Activated naive CD4-positive, alpha-beta T cell treated with anti-CD3 and anti-CD28 coated beads, Interleukin-2, amount 10 ng/mL, durations not matched to agents 7 days and 5 days (primary cell): ENCODE measurements at regions of chr1 and their contacts with region 1.

Region 1: GRCh38 chr1:208025031-208025430 is 114.1 kb upstream of the CD34 start:
- DNase-seq: no peak
- H3K4me3 Mint-ChIP-seq: no peak overlapping the region
- H3K27ac Mint-ChIP-seq: no peak overlapping the region
- H3K4me1 Mint-ChIP-seq: no peaks in the 10 kb centered on the region
- H3K27me3 Mint-ChIP-seq: peaks cover 38% of the 10 kb centered on the region

Region 2: DNA sequence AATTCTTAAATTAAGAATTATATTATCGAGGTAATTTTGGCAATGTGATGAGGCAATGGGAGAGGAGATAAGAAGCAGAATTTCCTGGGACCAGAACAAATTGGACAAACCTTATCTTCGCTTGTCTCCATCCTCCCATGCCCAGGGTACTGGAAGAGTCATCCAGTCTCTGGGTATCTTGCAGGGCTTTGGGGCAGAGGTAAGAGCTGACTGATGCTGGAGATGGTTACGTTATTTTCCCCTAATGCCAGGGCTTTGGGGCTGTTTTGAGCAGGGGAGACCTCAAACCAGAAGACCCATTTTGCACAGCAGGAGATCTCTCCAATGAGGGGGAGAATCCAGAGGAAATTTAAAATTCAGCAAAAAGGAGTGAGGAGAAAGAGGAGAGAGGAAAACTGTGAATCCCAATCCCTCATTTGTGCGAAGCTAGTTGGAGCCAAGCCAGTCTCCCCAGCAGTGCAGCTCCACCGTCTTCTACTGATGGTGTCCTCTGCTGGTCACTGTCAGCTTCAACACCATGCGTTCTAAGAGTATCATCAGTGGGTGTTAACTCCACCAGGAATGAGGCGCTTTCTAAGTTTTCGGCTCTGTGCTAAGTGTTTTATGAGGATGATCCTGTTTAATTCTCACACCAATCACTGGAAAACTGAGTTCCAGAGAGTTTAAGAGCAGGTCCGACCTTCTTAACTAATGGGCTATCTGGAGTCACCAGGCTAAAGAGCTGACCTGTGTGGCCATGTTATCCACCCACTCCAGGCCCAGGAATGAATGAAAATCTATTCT is 27.4 kb before region 1 on chr1:
- CTCF ChIA-PET with region 1: interaction called, 13 read pairs
- DNase-seq: peak; percentile 69
- H3K4me3 Mint-ChIP-seq: no peak overlapping the region
- H3K27ac Mint-ChIP-seq: no peak overlapping the region
- H3K4me1 Mint-ChIP-seq: no peaks in the 10 kb centered on the region
- H3K27me3 Mint-ChIP-seq: peaks cover 27% of the 10 kb centered on the region

Region 3: DNA sequence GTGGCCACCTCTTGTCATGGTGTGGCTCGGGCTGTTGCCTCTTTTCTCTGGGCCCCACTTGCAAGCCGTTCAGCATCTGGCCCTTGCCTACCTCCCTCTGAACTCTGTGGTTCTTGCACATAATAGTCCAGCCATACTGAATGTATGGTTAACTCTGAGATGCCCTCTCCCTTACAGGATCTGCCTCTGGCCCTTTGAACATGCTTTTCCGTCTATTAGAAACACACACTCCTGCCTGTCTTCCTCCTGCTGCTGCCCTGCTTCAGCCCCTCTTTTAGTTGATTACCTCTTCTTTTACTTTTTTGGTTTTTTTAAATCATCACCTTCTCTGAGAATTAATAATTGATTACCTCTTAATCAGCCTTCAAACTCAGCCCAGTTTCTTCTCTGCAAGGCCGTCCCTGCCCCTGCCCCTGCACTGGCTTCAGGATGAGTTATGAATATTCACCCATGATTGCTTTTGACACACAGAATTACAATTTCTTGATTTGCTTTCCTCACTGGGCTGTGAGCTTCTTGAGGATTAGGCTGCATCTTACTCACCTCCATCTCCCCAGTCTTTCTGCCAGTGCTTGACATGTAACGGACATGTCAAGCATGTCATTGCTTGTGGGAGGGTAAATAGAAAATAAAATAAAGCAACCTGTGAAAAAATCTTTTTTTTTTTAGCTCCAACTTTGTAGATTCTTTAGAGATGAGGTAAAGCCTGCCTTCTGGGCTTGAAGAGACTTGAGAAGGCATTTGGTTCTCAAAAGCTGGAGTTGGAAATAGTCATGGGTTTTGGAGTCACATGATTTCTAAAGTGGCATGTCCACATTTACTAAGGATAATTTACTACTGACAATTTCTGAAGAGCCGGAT is 60.9 kb after region 1 on chr1:
- CTCF ChIA-PET with region 1: interaction called, 10 read pairs
- DNase-seq: no peak
- H3K4me3 Mint-ChIP-seq: peak overlapping the region; percentile 67
- H3K27ac Mint-ChIP-seq: peak overlapping the region; percentile 89
- H3K4me1 Mint-ChIP-seq: peaks cover 19% of the 10 kb centered on the region
- H3K27me3 Mint-ChIP-seq: peaks cover 6% of the 10 kb centered on the region

Region 4: GRCh38 chr1:208093754-208094719 is 69.0 kb after region 1 on chr1:
- CTCF ChIA-PET with region 1: interaction called, 136 read pairs
- DNase-seq: peak; percentile 78
- H3K4me3 Mint-ChIP-seq: no peak overlapping the region
- H3K27ac Mint-ChIP-seq: no peak overlapping the region
- H3K4me1 Mint-ChIP-seq: no peaks in the 10 kb centered on the region
- H3K27me3 Mint-ChIP-seq: no peaks in the 10 kb centered on the region

Region 5: DNA sequence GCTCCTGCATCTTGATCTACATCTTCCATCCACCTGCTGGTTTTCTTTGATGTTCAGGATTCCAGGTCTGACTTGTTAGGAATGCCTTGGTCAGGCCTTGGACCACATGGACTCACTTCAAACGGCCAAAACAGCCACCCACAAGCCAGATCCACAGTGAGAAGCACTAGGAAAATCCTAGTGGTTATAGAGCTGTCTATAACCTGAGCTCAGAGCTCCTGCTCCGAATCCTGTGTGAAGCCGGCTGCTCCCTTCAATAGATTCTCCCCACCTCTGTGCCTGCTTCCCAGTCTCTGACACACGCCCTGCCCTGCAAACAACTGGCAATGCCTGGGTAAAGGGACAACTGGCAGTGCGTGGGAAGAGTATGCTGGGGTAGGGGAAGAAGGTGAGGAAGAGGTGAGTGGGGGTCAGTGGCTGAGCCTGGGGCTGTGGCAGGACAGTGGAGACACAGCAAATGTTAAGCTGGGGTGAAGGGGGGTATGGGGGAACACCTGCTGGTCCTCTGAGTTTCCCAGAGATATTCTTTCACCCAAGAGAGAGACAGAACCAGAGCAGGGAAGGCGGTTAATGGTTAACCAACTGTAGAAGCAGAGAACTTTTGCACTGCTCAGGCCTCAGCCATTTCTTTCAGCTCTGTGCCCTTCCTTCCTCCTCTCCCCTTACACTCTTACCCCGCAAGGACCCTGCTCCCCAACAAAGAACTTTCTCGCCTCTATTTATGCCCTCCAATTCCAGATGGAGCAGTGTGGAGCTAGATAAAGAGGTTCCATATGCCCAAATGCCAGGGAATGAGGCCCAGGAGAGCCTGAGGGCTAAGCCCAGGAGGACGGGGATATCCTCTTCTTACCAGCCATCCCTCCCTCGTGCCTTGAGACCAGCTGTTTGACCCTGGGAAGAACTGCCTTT is 214.7 kb after region 1 on chr1:
- CTCF ChIA-PET with region 1: interaction called, 40 read pairs
- DNase-seq: no peak
- H3K4me3 Mint-ChIP-seq: no peak overlapping the region
- H3K27ac Mint-ChIP-seq: no peak overlapping the region
- H3K4me1 Mint-ChIP-seq: peaks cover 23% of the 10 kb centered on the region
- H3K27me3 Mint-ChIP-seq: peaks cover 100% of the 10 kb centered on the region

Region 6: DNA sequence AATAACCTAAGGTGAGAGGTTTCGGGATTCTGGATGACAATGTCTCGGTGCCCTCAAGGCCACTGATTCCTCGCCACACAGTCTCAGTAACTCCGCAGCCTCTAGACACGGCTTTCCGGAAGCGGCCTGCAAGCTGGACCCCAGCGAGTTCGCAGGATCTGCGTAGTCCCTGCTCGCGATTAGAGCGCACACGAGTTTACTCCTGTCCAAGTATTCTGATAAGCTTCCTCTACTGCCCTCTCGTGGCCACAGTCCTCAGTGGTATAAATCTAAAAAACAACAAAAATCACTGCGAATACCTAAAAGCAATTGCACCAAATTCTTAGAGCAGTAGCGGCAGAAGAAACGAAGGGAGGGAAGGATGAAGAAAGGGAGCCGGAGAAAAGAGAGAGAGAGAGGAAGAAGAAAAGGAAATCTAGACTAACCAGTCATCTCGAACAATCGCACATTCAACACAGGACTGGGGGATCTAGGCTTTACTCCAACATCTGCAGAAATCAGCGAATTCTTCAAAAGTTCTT is 220.2 kb after region 1 on chr1:
- CTCF ChIA-PET with region 1: interaction called, 40 read pairs
- DNase-seq: peak; percentile 85
- H3K4me3 Mint-ChIP-seq: peak overlapping the region; percentile 63
- H3K27ac Mint-ChIP-seq: no peak overlapping the region
- H3K4me1 Mint-ChIP-seq: peaks cover 10% of the 10 kb centered on the region
- H3K27me3 Mint-ChIP-seq: peaks cover 77% of the 10 kb centered on the region